Activated CD4-positive, alpha-beta memory T cell treated with anti-CD3 and anti-CD28 coated beads, Interleukin-2, amount 10 ng/mL, durations not matched to agents 7 days and 5 days (primary cell): ENCODE measurements at regions of chr6 and their contacts with region 1.

Region 1: DNA sequence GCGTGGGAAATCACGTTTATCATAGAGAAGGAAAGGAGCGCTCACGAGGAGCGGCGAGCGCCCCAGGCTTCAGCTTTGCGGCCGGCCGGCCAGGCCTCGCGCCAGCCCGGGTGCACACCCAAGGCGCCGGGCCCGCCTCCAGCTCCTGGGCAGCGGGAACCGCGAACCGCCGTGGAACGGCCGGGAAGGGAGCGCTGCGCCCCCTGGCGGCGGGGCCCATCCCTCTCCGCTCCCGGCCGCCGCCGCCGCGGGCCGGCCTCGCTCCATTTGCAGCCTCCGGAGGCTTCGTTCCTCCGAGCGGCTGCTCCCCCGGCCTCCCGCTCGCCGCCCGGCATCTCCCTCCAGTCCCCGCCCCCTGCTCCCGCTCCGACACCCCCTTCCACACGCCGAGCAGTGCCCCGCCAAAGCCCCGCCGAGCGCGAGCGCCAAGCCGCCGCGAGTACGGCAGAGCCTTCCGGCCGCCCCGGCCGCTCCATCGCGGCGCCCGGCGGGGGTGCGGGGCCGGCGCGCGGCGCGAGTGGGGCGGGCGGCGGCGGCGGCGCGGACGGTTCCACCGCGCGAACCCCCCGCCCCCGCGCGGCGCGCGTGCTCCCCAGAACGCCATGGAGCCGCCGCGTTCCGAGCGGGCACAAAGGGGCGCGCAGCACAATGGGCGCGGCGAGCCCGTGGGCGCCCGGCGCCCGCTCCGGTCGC is 956 bp downstream of the BEND3 start:
- DNase-seq: peak; percentile 72
- H3K4me3 Mint-ChIP-seq: peak overlapping the region; percentile 70
- H3K27ac Mint-ChIP-seq: peak overlapping the region; percentile 12
- H3K4me1 Mint-ChIP-seq: peaks cover 20% of the 10 kb centered on the region
- H3K27me3 Mint-ChIP-seq: peaks cover 17% of the 10 kb centered on the region

Region 2: GRCh38 chr6:106979427-106979884 is 134.9 kb before region 1 on chr6:
- CTCF ChIA-PET with region 1: no interaction called
- POLR2A ChIA-PET with region 1: no interaction called
- DNase-seq: peak; percentile 82
- H3K4me3 Mint-ChIP-seq: no peak overlapping the region
- H3K27ac Mint-ChIP-seq: no peak overlapping the region
- H3K4me1 Mint-ChIP-seq: peaks cover 8% of the 10 kb centered on the region
- H3K27me3 Mint-ChIP-seq: peaks cover 40% of the 10 kb centered on the region

Region 3: GRCh38 chr6:107026965-107027364 is 87.4 kb before region 1 on chr6:
- CTCF ChIA-PET with region 1: interaction called, 26 read pairs
- POLR2A ChIA-PET with region 1: interaction called, 18 read pairs
- DNase-seq: no peak
- H3K4me3 Mint-ChIP-seq: peak overlapping the region; percentile 30
- H3K27ac Mint-ChIP-seq: peak overlapping the region; percentile 60
- H3K4me1 Mint-ChIP-seq: peaks cover 30% of the 10 kb centered on the region
- H3K27me3 Mint-ChIP-seq: no peaks in the 10 kb centered on the region

Region 4: DNA sequence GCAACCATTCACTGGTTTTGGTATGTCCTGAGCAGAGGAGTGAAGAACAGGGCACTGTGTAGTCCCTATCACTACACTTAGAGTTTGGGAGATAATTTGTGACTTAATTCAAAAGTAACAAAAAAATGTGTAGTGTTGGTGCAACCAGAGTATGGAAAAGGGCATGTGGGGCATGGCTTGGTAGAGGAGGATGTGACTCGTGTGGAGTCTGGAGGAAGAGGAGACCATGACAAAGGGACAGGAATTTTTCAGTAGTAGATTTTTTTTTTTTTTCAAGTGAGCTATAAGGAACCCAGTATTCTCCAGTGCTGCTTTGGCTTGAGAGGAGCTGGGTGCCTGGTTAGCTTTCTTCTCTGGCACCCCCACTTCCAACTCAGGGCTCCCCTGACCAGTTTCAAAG is 81.2 kb before region 1 on chr6:
- CTCF ChIA-PET with region 1: interaction called, 26 read pairs
- POLR2A ChIA-PET with region 1: interaction called, 18 read pairs
- DNase-seq: no peak
- H3K4me3 Mint-ChIP-seq: no peak overlapping the region
- H3K27ac Mint-ChIP-seq: no peak overlapping the region
- H3K4me1 Mint-ChIP-seq: peaks cover 34% of the 10 kb centered on the region
- H3K27me3 Mint-ChIP-seq: no peaks in the 10 kb centered on the region

Region 5: GRCh38 chr6:107061125-107062020 is 53.0 kb before region 1 on chr6:
- CTCF ChIA-PET with region 1: interaction called, 13 read pairs
- POLR2A ChIA-PET with region 1: interaction called, 10 read pairs
- DNase-seq: peak; percentile 41
- H3K4me3 Mint-ChIP-seq: peak overlapping the region; percentile 36
- H3K27ac Mint-ChIP-seq: peak overlapping the region; percentile 77
- H3K4me1 Mint-ChIP-seq: peaks cover 55% of the 10 kb centered on the region
- H3K27me3 Mint-ChIP-seq: no peaks in the 10 kb centered on the region

Region 6: GRCh38 chr6:107284805-107285204 is 170.4 kb after region 1 on chr6:
- CTCF ChIA-PET with region 1: no interaction called
- POLR2A ChIA-PET with region 1: no interaction called
- DNase-seq: no peak
- H3K4me3 Mint-ChIP-seq: no peak overlapping the region
- H3K27ac Mint-ChIP-seq: no peak overlapping the region
- H3K4me1 Mint-ChIP-seq: no peaks in the 10 kb centered on the region
- H3K27me3 Mint-ChIP-seq: no peaks in the 10 kb centered on the region

Region 7: DNA sequence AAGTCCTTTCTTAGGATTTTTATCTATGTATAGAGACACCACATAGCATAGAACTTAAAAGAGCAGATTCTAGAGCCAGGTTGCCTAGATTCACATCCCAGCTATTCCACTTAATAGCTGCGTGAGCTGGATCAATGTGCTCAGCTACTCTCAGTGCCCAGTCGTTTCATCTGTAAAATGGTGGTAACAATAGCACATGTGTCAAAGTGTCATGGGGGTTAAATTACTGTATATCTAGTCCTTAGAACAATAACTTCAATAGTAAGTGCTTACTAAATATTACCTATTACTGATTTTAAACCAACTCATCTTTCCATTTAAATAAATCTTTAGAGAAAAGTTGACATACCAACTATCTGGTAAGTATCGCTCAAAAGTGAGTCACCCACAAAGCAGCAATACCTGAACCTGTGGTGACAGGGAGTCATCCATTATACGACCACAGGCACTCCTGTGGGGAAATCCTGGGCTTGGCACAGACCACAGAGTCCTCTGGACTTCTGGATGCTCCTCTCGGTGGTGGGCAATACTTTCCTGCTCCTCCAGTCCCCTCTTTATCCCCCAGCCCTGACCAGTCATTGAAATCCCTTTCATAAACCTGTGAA is 190.2 kb after region 1 on chr6:
- CTCF ChIA-PET with region 1: no interaction called
- POLR2A ChIA-PET with region 1: no interaction called
- DNase-seq: no peak
- H3K4me3 Mint-ChIP-seq: no peak overlapping the region
- H3K27ac Mint-ChIP-seq: no peak overlapping the region
- H3K4me1 Mint-ChIP-seq: peaks cover 3% of the 10 kb centered on the region
- H3K27me3 Mint-ChIP-seq: no peaks in the 10 kb centered on the region

Region 8: GRCh38 chr6:107319906-107320530 is 205.7 kb after region 1 on chr6:
- CTCF ChIA-PET with region 1: no interaction called
- POLR2A ChIA-PET with region 1: no interaction called
- DNase-seq: no peak
- H3K4me3 Mint-ChIP-seq: no peak overlapping the region
- H3K27ac Mint-ChIP-seq: no peak overlapping the region
- H3K4me1 Mint-ChIP-seq: no peaks in the 10 kb centered on the region
- H3K27me3 Mint-ChIP-seq: no peaks in the 10 kb centered on the region